A549 (cell line): ENCODE measurements at regions of chr5 and their contacts with region 1.

Region 1: DNA sequence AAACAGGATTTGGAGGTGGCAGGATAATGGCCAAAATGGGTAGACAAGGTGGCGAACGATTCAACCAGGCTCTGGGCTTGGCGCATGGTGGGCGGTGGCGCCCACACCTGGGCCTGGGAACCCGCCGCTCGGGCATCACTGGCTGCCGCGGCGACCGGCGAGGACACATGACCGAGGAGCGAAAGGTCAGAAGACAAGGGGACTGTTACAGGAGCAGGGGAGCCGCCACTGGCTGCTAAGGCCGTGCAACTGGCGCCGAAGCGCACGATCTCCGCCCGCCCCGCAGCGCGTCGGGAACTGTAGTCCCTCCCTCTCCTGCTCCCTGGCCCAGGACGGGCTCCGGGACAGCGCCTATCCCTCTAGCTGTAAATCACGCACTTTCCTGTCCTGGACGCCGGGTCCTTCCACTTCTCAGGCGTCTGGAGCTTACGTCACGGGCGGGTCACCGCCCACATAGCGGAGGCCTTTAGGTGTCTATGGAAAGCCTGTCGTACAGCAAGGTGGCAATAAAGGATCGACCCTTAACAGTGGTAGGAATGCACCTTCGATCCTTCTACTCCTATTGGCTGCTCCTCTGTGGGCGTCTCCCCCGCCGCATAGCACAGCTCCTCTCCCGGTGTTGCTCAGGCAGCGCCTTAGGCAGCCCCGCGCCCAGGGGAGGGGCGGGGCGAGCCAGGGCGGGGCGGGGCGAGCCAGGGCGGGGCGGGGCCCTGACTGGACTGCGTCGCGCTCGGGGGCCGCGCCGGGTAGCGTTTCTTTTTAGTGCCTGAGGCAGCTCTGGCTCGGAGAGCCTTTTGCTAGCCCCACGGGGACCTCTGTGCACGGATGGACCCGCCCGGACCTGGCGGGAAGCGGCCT is at the start of gene ICE1:
- DNase-seq: peak; percentile 88 to 99
- ATAC-seq: peak; percentile 94 to 98
- H3K4me3 ChIP-seq: peak within 1 kb of the TSS; percentile 95
- H3K27ac ChIP-seq: peak within 1 kb of the TSS; percentile 87 to 88
- H3K4me1 ChIP-seq: peaks cover 18% of the 10 kb centered on the region; the same call in 2 of the 3 replicates
- CTCF ChIP-seq: no peak
- EP300 ChIP-seq: no peak
- POLR2A ChIP-seq: peak; percentile 95
- RAD21 ChIP-seq: no peak
- polyA plus RNA-seq, gene ICE1: 29.1 and 33.1 TPM in 2 replicates

Region 2: GRCh38 chr5:4879693-4880303 is 542.4 kb before region 1 on chr5:
- CTCF ChIA-PET with region 1: interaction called, 234 read pairs
- POLR2A ChIA-PET with region 1: interaction called, 6 read pairs
- DNase-seq: peak; percentile 65 to 72
- ATAC-seq: peak; percentile 82 to 94; a peak in 5 of 6 replicates
- H3K4me3 ChIP-seq: no peak overlapping the region
- H3K27ac ChIP-seq: no peak overlapping the region
- H3K4me1 ChIP-seq: no peaks in the 10 kb centered on the region
- CTCF ChIP-seq: peak; percentile 87
- EP300 ChIP-seq: no peak
- POLR2A ChIP-seq: no peak
- RAD21 ChIP-seq: peak; percentile 95 to 97

Region 3: GRCh38 chr5:5141625-5142532 is 280.3 kb before region 1 on chr5:
- CTCF ChIA-PET with region 1: interaction called, 65 read pairs
- POLR2A ChIA-PET with region 1: interaction called, 8 read pairs
- DNase-seq: peak in 1 of 2 experiments; percentile 71
- ATAC-seq: peak in 1 of 2 experiments; percentile 49; a peak in 3 of 6 replicates
- H3K4me3 ChIP-seq: no peak overlapping the region
- H3K27ac ChIP-seq: peak overlapping the region in 1 of 2 experiments; percentile 19; a peak in 1 of 6 replicates
- H3K4me1 ChIP-seq: peaks cover 7% of the 10 kb centered on the region; the same call in 1 of the 3 replicates
- CTCF ChIP-seq: peak; percentile 83
- EP300 ChIP-seq: no peak
- POLR2A ChIP-seq: no peak
- RAD21 ChIP-seq: peak; percentile 87 to 90

Region 4: DNA sequence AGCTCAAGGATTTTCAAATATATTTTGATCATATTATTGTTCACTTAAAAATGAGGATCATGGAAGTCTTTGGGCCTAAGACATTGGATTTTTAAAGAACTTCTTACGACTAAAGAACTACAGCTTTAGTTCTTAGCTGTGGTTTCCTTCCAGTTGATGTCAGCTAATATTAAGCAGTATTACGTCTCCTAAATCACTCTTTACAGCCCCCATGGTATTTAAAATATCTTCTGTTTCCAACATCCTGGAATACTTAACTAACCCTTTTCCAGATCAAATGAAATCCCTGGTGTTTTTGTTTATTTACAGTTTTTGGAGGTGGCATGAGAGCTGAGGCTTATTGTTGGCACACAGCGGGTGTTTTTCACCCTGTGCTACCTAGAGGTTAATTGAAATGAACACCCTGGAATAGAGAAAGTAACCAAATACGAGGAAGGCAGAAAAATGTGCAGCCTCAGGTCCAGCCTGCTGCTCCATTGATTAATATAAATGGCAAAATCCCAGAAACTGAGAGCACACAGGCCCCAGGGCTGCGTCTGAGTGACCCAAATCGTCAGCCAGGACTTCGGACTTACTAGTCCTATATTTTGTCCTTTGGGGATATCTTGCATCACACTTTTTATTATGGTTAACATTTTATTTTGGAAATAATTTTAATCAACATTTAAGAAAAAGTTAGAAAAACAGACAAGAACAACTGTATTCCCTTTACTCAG is 52.0 kb before region 1 on chr5:
- CTCF ChIA-PET with region 1: interaction called, 12 read pairs
- POLR2A ChIA-PET with region 1: no interaction called
- DNase-seq: no peak
- ATAC-seq: no peak
- H3K4me3 ChIP-seq: no peak overlapping the region
- H3K27ac ChIP-seq: no peak overlapping the region
- H3K4me1 ChIP-seq: no peaks in the 10 kb centered on the region
- CTCF ChIP-seq: no peak
- EP300 ChIP-seq: no peak
- POLR2A ChIP-seq: no peak
- RAD21 ChIP-seq: no peak

Region 5: GRCh38 chr5:5409151-5409810 is 12.9 kb before region 1 on chr5:
- CTCF ChIA-PET with region 1: interaction called, 17 read pairs
- POLR2A ChIA-PET with region 1: no interaction called
- DNase-seq: peak in 1 of 2 experiments; percentile 47
- ATAC-seq: no peak
- H3K4me3 ChIP-seq: no peak overlapping the region
- H3K27ac ChIP-seq: no peak overlapping the region
- H3K4me1 ChIP-seq: no peaks in the 10 kb centered on the region
- CTCF ChIP-seq: no peak
- EP300 ChIP-seq: no peak
- POLR2A ChIP-seq: no peak
- RAD21 ChIP-seq: no peak